ENCODE measurements at regions of chr13 and their contacts with region 1.

Region 1: DNA sequence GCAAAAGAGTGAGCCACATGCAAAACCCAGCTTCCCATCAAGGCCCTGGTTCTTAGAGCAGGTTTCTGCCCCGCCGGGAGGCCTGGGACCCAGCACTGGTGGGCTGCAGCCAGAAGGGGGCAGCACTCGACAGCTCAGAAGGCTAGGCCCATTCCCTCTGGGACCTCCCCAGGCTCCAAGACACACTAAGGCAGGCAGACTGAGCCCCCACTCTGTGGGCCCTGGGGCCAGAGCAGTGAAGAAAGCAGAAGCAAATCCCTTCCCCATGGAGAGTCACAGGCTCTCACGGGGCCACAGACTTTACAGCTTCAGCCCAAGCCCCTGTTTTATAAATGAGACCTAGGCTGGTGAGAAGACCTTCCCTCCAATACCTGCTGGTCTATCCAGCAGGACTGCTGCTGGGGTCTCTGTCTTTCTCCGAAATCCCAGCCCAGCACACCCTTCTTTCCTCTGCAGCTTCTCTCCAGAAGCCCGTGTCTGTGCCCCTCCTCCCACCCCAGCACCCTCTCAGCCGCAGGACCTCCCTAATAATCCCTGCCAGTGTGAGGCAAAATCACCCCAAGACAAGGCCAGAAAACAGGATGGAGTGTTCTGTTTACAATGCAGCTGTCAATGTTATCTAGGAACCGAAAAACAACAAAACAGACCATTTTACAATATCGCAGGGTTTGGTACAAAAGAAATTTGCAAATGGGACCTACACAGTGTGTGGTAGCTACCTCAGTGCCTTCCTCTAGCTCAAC is 109.3 kb downstream of the ABCC4 start:
- DNase-seq: no peak
- H3K4me3 ChIP-seq: no peak overlapping the region
- H3K27me3 ChIP-seq: no peaks in the 10 kb centered on the region
- CTCF ChIP-seq: peak; percentile 98

Region 2: DNA sequence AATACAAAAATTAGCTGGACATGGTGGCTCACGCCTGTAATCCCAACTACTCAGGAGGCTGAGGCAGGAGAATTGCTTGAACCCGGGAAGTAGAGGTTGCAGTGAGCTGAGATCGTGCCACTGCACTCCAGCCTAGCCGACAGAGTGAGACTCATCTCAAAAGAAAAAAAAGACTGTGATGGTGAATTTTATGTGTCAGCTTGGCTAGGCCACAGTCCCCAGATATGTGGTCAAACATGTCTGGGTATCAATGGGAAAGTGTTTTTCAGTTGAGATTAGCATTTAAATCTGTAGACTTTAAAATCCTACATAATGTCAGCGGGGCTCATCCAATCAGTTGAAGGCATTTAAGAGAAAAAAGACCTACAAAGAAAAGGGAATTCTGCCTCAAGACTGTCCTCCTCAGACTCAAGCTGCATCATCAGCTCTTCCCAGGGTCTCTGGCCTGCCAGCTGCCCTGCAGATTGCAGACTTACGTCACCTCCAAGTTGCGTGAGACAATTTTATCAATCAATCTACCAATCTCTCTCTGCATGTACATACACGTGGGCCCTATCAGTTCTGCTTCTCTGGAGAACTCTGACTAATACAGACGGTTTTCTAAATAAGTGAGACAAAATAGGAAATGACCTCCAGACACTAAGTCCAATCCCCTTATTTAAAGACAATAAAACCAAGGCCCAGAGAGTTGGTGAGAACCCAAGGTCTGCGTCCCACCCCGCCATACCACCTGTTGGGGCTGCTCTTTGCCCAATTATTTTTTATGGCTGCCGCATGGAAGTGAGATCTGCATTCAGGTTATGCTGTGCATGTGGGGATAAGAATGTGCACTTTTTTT is 10.0 kb after region 1 on chr13:
- CTCF ChIA-PET with region 1: interaction called, 16 read pairs
- POLR2A ChIA-PET with region 1: no interaction called
- DNase-seq: no peak
- H3K4me3 ChIP-seq: no peak overlapping the region
- H3K27me3 ChIP-seq: no peaks in the 10 kb centered on the region
- CTCF ChIP-seq: no peak

Region 3: DNA sequence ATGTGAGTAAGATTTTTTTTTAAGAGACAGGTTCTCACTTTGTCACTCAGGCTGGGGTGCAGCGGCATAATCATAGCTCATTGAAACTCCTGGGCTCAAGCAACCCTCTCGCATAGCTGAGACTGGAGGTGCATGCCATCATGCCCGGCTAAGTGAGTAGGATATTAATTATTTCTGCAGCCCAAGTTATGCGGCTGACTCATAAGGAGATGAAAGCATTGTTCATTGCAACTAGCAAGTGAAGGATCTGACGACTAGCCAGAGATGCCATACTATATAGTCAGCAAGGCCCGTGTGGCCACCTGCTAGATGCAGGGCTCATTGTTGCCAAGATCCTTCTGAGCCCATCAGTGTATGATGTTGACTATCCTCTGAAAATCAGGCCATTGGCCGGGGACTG is 64.1 kb after region 1 on chr13:
- CTCF ChIA-PET with region 1: no interaction called
- POLR2A ChIA-PET with region 1: no interaction called
- DNase-seq: peak; percentile 59
- H3K4me3 ChIP-seq: no peak overlapping the region
- H3K27me3 ChIP-seq: no peaks in the 10 kb centered on the region
- CTCF ChIP-seq: no peak

Region 4: GRCh38 chr13:95301183-95301967 is 109.4 kb after region 1 on chr13 and contains the start of gene ABCC4:
- CTCF ChIA-PET with region 1: interaction called, 10 read pairs
- POLR2A ChIA-PET with region 1: no interaction called
- DNase-seq: no peak
- H3K4me3 ChIP-seq: peak within 1 kb of the TSS; percentile 64
- H3K27me3 ChIP-seq: no peaks in the 10 kb centered on the region
- CTCF ChIP-seq: peak; percentile 9; the same call in 1 of the 2 replicates
- polyA plus RNA-seq, gene ABCC4: 11.2 and 17.4 TPM in 2 replicates

Region 5: DNA sequence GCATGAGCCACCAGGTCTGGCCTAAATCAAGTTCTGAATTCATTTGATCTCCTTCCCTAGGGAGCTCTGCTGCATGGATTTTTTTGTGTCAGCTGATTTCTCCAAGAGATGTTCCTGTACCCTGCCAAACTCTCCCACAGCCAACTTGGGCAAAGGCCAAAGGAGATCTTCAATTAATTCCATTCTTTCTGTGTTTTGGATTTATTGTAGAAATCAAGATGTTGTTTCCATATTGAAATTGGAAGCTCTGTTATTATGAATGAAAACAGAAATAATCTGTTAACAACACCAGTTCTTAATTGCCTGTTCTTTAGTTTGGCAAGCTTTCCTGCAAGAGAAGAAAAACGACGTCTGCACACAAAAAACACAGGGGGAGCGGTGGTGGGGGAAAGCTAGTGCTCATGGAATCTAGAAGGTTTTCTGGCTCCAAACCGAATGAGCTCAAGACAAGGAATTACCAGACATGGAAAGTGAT is 195.8 kb after region 1 on chr13:
- CTCF ChIA-PET with region 1: interaction called, 325 read pairs
- POLR2A ChIA-PET with region 1: no interaction called
- DNase-seq: no peak
- H3K4me3 ChIP-seq: no peak overlapping the region
- H3K27me3 ChIP-seq: peaks cover 5% of the 10 kb centered on the region; the same call in 1 of the 2 replicates
- CTCF ChIP-seq: no peak

Region 6: DNA sequence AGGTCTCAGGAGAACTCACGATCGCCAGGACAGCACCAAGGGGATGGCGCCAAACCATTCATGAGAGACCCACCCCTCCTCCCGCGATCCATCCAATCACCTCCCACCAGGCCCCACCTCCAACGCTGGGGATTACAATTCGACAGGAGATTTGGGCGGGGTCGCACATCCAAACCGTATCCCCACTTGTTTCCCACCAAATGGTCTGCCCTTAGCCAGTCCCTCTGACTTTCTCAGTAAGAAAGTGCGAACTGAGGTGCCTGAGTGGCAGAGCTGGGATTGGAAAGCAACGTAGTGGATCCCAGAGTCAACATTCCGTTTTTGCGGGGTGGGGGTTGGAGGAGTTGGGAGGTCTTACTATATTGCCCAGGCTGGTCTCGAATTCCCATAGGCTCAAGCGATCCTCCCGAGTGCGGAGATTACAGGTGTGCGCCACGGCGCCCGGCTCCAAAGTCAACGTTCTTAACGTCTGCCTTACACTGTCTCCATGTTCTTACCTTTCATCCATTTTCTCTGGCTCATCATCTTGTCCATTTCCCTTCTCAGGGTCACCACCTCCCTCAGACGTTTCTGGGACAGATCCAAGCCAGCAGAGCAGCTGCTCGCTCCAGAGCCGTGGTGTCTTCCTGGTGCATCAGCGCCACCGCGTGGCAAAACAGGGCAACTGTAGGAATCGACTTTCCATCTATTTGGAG is 212.0 kb after region 1 on chr13:
- CTCF ChIA-PET with region 1: interaction called, 323 read pairs
- POLR2A ChIA-PET with region 1: no interaction called
- DNase-seq: peak; percentile 7
- H3K4me3 ChIP-seq: peak overlapping the region; percentile 32
- H3K27me3 ChIP-seq: no peaks in the 10 kb centered on the region
- CTCF ChIP-seq: peak; percentile 89

Region 7: DNA sequence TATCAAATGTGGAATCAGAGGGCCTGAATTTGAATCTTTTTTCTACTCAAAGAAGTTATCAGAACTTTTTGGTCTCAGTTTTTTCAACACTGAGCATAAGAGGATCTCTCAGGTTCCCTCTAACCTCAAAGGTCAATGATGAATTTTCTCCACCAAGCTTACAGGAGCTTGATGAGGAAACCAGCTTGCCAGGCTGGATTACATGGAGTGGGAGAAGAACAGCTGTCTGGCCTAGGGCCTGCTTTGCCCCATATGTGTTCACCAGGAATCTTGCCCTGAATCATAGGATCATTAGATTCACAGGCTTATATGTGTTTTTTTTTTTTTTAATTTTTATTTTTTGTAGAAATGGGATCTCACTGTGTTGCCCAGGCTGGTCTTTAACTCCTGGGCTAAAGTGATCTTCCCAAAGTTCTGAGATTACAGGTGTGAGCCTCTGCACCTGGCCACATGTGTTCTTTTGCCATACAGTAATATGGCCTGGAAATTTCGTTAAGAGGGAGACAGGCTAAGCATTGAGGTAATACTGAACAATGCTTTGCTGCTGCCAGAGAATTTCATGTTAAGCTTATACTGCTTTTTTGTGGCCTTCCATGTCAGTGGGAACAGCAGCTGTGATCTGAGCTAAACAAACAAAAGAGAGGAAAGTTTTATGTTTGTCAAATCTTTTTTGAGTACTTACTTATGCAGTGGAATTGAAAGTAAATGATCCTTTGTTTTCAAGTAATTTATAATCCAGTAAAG is 595.5 kb after region 1 on chr13:
- CTCF ChIA-PET with region 1: no interaction called
- POLR2A ChIA-PET with region 1: no interaction called
- DNase-seq: no peak
- H3K4me3 ChIP-seq: no peak overlapping the region
- H3K27me3 ChIP-seq: no peaks in the 10 kb centered on the region
- CTCF ChIP-seq: no peak